Naive thymus-derived CD4-positive, alpha-beta T cell (primary cell): ENCODE measurements at regions of chr10 and their contacts with region 1.

Region 1: DNA sequence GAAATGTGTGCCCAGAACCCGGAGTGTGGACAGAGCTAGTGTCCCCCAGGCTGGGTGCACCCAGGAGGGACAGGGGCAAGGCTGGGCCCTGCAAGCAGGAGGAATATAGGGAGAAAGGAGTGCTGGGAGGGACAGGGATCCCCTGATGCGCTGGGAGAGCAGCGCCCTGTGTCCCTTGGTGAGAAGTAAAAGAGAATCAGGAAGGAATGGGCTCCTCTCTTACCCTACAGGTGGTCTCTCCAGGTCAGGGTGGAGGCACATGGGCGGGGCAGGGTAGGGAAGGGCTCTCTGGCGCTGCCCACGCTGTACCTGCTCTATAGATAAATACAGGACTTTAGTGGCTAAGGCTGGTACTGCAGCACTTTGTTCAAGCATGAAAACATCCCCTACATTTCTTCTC is 753.8 kb downstream of the GRID1 start:
- DNase-seq: peak in 4 of 9 donors; percentile 19 to 35 (median 24)
- ATAC-seq: peak; percentile 56
- H3K4me3 ChIP-seq: peak overlapping the region; percentile 44
- H3K4me3 Mint-ChIP-seq: peak overlapping the region; percentile 69 to 88 (median 78)
- H3K27ac ChIP-seq: no peak overlapping the region
- H3K27ac Mint-ChIP-seq: peak overlapping the region; percentile 54 to 94 (median 83)
- H3K4me1 ChIP-seq: peaks cover 36 to 44% of the 10 kb centered on the region in 2 donors
- H3K4me1 Mint-ChIP-seq: peaks cover 30 to 81% (median 71%) of the 10 kb centered on the region in 7 donors
- H3K27me3 ChIP-seq: no peaks in the 10 kb centered on the region
- H3K27me3 Mint-ChIP-seq: peaks cover 0 to 34% (median 0%) of the 10 kb centered on the region in 5 donors

Region 2: DNA sequence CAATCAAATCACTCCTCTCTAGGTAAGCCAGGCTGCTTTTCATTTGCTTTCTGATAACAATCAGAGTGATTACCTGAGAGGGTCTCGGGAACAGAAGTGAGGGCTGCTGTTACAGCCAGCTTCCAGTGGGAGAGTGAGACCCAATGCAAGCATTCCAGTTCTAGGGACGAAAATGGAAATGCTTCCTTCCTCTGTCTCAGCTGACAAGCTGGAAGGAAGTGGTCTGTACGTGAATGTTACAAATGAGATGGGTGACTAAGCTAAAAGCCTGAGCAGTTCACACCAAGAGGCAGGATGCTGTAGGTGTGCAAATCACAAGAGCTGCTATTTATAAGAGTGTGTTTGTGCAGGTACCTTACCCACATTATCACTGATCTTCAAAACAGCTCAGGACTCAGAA is 18.6 kb before region 1 on chr10:
- CTCF ChIA-PET with region 1: no interaction called
- POLR2A ChIA-PET with region 1: interaction called, 6 read pairs
- intact Hi-C with region 1: loop called in 1 of 2 experiments (anchors 2 kb)
- DNase-seq: peak in 2 of 9 donors; percentile 18 to 21
- ATAC-seq: peak; percentile 32
- H3K4me3 ChIP-seq: no peak overlapping the region
- H3K4me3 Mint-ChIP-seq: peak overlapping the region in 3 of 10 donors; percentile 30 to 65 (median 42)
- H3K27ac ChIP-seq: no peak overlapping the region
- H3K27ac Mint-ChIP-seq: peak overlapping the region in 7 of 9 donors; percentile 29 to 85 (median 45)
- H3K4me1 ChIP-seq: peaks cover 13 to 14% of the 10 kb centered on the region in 2 donors
- H3K4me1 Mint-ChIP-seq: peaks cover 8 to 27% (median 20%) of the 10 kb centered on the region in 7 donors
- H3K27me3 ChIP-seq: no peaks in the 10 kb centered on the region
- H3K27me3 Mint-ChIP-seq: peaks cover 0 to 7% (median 0%) of the 10 kb centered on the region in 5 donors

Region 3: DNA sequence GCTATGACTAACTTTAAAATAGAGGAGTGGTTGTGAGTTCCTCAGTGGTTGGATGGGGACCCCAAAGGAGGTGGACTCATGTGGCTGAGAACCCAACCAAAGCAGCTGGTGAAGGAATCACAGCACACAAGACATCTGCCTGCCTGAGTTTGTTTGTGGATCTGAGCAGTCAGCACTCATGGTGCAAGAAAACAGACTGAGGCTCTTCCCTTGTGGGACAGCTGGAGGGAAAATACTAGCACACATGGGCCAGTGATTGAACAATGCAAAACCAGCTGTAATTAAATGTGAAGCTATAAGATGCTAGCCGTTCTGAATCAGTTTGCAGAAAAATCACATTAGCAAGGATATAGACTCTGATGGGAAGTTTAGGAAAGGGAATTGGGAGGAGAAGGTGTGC is 46.5 kb after region 1 on chr10:
- CTCF ChIA-PET with region 1: no interaction called
- POLR2A ChIA-PET with region 1: no interaction called
- intact Hi-C with region 1: loop called in 1 of 2 experiments (anchors 1 kb)
- DNase-seq: no peak
- ATAC-seq: no peak
- H3K4me3 ChIP-seq: no peak overlapping the region
- H3K4me3 Mint-ChIP-seq: no peak overlapping the region
- H3K27ac ChIP-seq: no peak overlapping the region
- H3K27ac Mint-ChIP-seq: no peak overlapping the region
- H3K4me1 ChIP-seq: no peaks in the 10 kb centered on the region
- H3K4me1 Mint-ChIP-seq: peaks cover 0 to 4% (median 0%) of the 10 kb centered on the region in 7 donors
- H3K27me3 ChIP-seq: no peaks in the 10 kb centered on the region
- H3K27me3 Mint-ChIP-seq: no peaks in the 10 kb centered on the region